MCF 10A (cell line): ENCODE measurements at regions of chr2 and their contacts with region 1.

Region 1: GRCh38 chr2:216555274-216555673 is 56.6 kb downstream of the RPL37A start:
- DNase-seq: peak; percentile 92
- H3K4me3 Mint-ChIP-seq: peak overlapping the region; percentile 24
- H3K27ac Mint-ChIP-seq: peak overlapping the region; percentile 94
- H3K4me1 Mint-ChIP-seq: peaks cover 34% of the 10 kb centered on the region
- H3K27me3 Mint-ChIP-seq: no peaks in the 10 kb centered on the region
- CTCF ChIP-seq: no peak

Region 2: DNA sequence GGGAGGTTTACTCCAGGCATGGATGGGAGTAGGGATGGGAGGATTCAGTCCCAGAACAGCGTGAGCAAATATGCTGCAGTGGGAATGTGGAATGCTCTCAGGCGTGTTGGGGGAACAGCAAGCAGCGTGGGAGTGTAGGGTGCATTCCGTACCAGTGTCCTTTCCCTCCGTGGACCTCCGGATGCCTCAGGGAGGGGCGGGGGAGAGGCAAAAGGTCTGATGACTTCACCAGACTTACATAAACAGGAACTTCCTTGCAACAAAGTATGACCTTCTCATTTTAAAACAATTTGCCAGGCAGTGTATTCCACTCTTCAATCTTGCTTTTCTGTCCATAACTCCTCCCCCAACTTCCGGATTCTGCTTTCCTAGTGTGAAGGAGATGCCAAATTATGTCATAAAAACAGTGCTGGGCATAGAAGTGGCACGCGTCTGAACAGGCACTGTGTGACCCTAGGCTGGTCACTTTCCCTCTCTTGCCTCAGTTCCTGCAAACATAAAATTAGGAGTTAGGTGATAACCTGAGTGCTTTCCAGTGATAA is 19.7 kb before region 1 on chr2:
- CTCF ChIA-PET with region 1: interaction called, 8 read pairs
- POLR2A ChIA-PET with region 1: interaction called, 32 read pairs
- intact Hi-C with region 1: loop called (anchors 1 kb)
- DNase-seq: peak; percentile 73
- H3K4me3 Mint-ChIP-seq: no peak overlapping the region
- H3K27ac Mint-ChIP-seq: no peak overlapping the region
- H3K4me1 Mint-ChIP-seq: peaks cover 45% of the 10 kb centered on the region
- H3K27me3 Mint-ChIP-seq: no peaks in the 10 kb centered on the region
- CTCF ChIP-seq: no peak